Calu3 (cell line): ENCODE measurements at regions of chr1 and their contacts with region 1.

Region 1: GRCh38 chr1:205591522-205592351 is 40.1 kb downstream of the ELK4 start:
- DNase-seq: peak; percentile 98
- H3K4me3 Mint-ChIP-seq: peak overlapping the region; percentile 67
- H3K27ac Mint-ChIP-seq: peak overlapping the region; percentile 70
- H3K4me1 Mint-ChIP-seq: peaks cover 47% of the 10 kb centered on the region
- H3K27me3 Mint-ChIP-seq: no peaks in the 10 kb centered on the region
- CTCF ChIP-seq: peak; percentile 99

Region 2: GRCh38 chr1:205528887-205529825 is 62.6 kb before region 1 on chr1:
- CTCF ChIA-PET with region 1: interaction called, 12 read pairs
- intact Hi-C with region 1: loop called (anchors 5 kb)
- DNase-seq: peak; percentile 95
- H3K4me3 Mint-ChIP-seq: peak overlapping the region; percentile 23
- H3K27ac Mint-ChIP-seq: peak overlapping the region; percentile 17
- H3K4me1 Mint-ChIP-seq: no peaks in the 10 kb centered on the region
- H3K27me3 Mint-ChIP-seq: no peaks in the 10 kb centered on the region
- CTCF ChIP-seq: peak; percentile 98

Region 3: DNA sequence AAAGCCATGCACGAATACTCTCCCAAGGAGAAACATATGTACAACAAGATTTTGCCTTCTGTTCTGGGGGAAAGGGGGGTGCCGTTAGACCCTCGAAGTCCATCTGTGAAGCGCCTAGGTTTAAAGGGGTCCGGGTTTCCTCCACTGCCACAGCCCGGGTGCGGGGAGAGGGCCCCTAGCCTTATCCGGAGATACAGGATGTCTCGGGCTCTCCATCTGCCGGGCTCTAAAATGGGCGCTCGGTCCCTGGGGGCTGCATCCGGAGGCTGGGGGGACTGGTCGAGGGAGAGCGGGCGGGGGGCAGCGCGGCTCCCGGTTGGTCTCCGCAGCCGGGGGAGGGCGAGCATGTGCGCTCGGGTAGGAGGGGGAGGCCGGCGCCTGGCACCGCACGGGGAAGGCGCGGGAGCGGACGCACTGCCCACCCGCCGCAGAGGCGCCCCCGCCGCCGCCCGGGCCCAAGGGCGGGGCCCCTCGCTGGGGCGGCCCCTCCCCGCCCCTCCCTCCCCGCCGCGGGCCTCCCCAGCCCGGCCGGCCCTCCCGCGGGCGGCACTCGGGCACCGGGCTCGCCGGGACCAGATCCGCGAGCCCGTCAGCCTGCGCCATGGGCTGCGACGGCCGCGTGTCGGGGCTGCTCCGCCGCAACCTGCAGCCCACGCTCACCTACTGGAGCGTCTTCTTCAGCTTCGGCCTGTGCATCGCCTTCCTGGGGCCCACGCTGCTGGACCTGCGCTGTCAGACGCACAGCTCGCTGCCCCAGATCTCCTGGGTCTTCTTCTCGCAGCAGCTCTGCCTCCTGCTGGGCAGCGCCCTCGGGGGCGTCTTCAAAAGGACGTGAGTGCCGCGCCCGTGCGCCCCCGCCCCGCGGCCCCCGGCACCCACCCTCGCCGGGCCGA is 23.0 kb before region 1 on chr1:
- CTCF ChIA-PET with region 1: interaction called, 11 read pairs
- intact Hi-C with region 1: no loop called
- DNase-seq: no peak
- H3K4me3 Mint-ChIP-seq: peak overlapping the region; percentile 60
- H3K27ac Mint-ChIP-seq: no peak overlapping the region
- H3K4me1 Mint-ChIP-seq: peaks cover 22% of the 10 kb centered on the region
- H3K27me3 Mint-ChIP-seq: peaks cover 78% of the 10 kb centered on the region
- CTCF ChIP-seq: no peak

Region 4: GRCh38 chr1:205631727-205632373 is 40.1 kb after region 1 on chr1 and contains the start of gene ELK4:
- CTCF ChIA-PET with region 1: interaction called, 90 read pairs
- intact Hi-C with region 1: loop called (anchors 1 kb)
- DNase-seq: peak; percentile 100
- H3K4me3 Mint-ChIP-seq: peak within 1 kb of the TSS; percentile 88
- H3K27ac Mint-ChIP-seq: peak within 1 kb of the TSS; percentile 97
- H3K4me1 Mint-ChIP-seq: peaks cover 7% of the 10 kb centered on the region
- H3K27me3 Mint-ChIP-seq: no peaks in the 10 kb centered on the region
- CTCF ChIP-seq: peak; percentile 90
- total RNA-seq, gene ELK4: 110 and 122 TPM in 2 replicates

Region 5: GRCh38 chr1:205711104-205712020 is 119.6 kb after region 1 on chr1:
- CTCF ChIA-PET with region 1: interaction called, 4 read pairs
- intact Hi-C with region 1: loop called (anchors 1 kb)
- DNase-seq: peak; percentile 77
- H3K4me3 Mint-ChIP-seq: no peak overlapping the region
- H3K27ac Mint-ChIP-seq: peak overlapping the region; percentile 60
- H3K4me1 Mint-ChIP-seq: peaks cover 22% of the 10 kb centered on the region
- H3K27me3 Mint-ChIP-seq: no peaks in the 10 kb centered on the region
- CTCF ChIP-seq: peak; percentile 76

Region 6: GRCh38 chr1:206496131-206496793 is 904.5 kb after region 1 on chr1:
- CTCF ChIA-PET with region 1: no interaction called
- intact Hi-C with region 1: no loop called
- DNase-seq: no peak
- H3K4me3 Mint-ChIP-seq: no peak overlapping the region
- H3K27ac Mint-ChIP-seq: no peak overlapping the region
- H3K4me1 Mint-ChIP-seq: peaks cover 24% of the 10 kb centered on the region
- H3K27me3 Mint-ChIP-seq: no peaks in the 10 kb centered on the region
- CTCF ChIP-seq: no peak